AG04449 (cell line): ENCODE measurements at regions of chr6 and their contacts with region 1.

Region 1: GRCh38 chr6:106620931-106621672 is 8.2 kb downstream of the RTN4IP1 start:
- DNase-seq: no peak
- H3K4me3 ChIP-seq: no peak overlapping the region
- CTCF ChIP-seq: no peak

Region 2: GRCh38 chr6:106556368-106556960 is 64.6 kb before region 1 on chr6:
- CTCF ChIA-PET with region 1: no interaction called
- POLR2A ChIA-PET with region 1: no interaction called
- DNase-seq: no peak
- H3K4me3 ChIP-seq: no peak overlapping the region
- CTCF ChIP-seq: peak; percentile 28

Region 3: GRCh38 chr6:106608062-106608668 is 12.9 kb before region 1 on chr6:
- CTCF ChIA-PET with region 1: interaction called, 37 read pairs
- POLR2A ChIA-PET with region 1: no interaction called
- DNase-seq: no peak
- H3K4me3 ChIP-seq: no peak overlapping the region
- CTCF ChIP-seq: peak; percentile 58